SK-N-SH (cell line): ENCODE measurements at regions of chr15 and their contacts with region 1.

Region 1: DNA sequence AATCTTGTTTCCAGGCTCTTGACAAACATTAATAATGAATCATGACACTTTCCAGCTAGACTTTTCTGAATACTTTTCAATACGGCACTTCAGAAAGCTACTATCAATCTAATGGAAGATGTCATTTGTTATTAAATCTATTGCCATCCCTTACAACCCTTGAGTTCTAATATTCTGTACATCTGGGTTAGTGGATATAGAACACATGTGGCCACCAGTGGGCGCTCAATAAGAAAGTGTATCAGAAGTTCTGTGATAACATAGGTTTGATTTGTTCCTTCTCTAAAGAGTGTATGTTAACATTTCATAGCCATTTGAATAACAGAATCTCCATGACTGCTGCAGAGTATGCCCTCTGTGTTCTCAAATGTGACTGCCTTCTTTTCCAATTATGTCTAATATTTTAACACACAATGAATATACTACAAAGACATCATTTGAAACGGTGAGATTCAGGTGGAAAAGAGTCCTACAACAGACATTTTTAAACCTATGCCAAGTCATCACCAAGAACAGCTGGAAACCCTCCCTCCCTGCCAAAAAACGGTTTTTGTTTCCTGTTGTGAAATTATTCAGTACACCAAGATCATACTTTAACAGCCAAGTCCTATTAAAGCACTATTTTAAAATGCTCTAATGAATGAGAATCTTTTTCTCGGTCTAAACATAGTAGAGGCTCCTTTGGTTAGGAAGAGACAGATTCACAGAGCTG is 22.2 kb downstream of the ALDH1A2 start:
- DNase-seq: no peak
- H3K4me3 ChIP-seq: no peak overlapping the region
- H3K27ac ChIP-seq: no peak overlapping the region
- H3K4me1 ChIP-seq: no peaks in the 10 kb centered on the region
- H3K27me3 ChIP-seq: no peaks in the 10 kb centered on the region; the same call in 1 of the 2 replicates
- CTCF ChIP-seq: peak; percentile 83
- EP300 ChIP-seq: no peak
- RAD21 ChIP-seq: peak; percentile 52

Region 2: DNA sequence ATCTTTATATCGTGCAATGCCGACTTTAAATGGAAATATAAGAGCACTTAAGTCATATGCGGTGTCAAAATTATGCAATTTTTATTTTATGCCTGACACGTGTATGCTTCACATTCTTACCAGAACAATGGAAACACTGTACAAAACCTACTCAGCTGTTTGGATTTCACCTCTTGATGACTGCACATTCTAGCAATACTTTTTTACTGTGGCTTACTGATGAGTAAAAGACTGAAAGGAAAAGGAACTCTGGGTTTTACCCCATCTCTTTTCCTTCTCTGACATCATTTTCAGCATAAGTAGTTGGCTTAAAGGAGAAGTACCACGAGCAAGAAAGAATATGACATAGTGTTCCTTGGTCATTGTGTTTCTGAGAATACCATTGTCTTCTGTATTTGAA is 194.0 kb before region 1 on chr15:
- CTCF ChIA-PET with region 1: no interaction called
- POLR2A ChIA-PET with region 1: no interaction called
- DNase-seq: no peak
- H3K4me3 ChIP-seq: no peak overlapping the region
- H3K27ac ChIP-seq: no peak overlapping the region
- H3K4me1 ChIP-seq: no peaks in the 10 kb centered on the region; a peak in 1 of 4 replicates
- H3K27me3 ChIP-seq: no peaks in the 10 kb centered on the region; the same call in 1 of the 2 replicates
- CTCF ChIP-seq: no peak
- EP300 ChIP-seq: no peak
- RAD21 ChIP-seq: no peak

Region 3: GRCh38 chr15:58057559-58057958 is 14.2 kb after region 1 on chr15:
- CTCF ChIA-PET with region 1: interaction called, 10 read pairs
- POLR2A ChIA-PET with region 1: no interaction called
- DNase-seq: no peak
- H3K4me3 ChIP-seq: no peak overlapping the region
- H3K27ac ChIP-seq: no peak overlapping the region
- H3K4me1 ChIP-seq: no peaks in the 10 kb centered on the region; a peak in 1 of 4 replicates
- H3K27me3 ChIP-seq: 0 out of 2 replicates have a peak, but pooled peaks cover 7% of the 10 kb centered on the region
- CTCF ChIP-seq: no peak
- EP300 ChIP-seq: no peak
- RAD21 ChIP-seq: no peak